Activated CD4-positive, alpha-beta memory T cell treated with anti-CD3 and anti-CD28 coated beads for 36 hours (primary cell): ENCODE measurements at regions of chr4 and their contacts with region 1.

Region 1: GRCh38 chr4:102500696-102501446 is at the start of gene NFKB1:
- DNase-seq: peak; percentile 87
- H3K4me3 Mint-ChIP-seq: peak within 1 kb of the TSS; percentile 94
- H3K27ac Mint-ChIP-seq: peak within 1 kb of the TSS; percentile 95
- H3K4me1 Mint-ChIP-seq: peaks cover 22% of the 10 kb centered on the region
- H3K27me3 Mint-ChIP-seq: no peaks in the 10 kb centered on the region
- total RNA-seq, gene NFKB1: 122 to 133 TPM

Region 2: DNA sequence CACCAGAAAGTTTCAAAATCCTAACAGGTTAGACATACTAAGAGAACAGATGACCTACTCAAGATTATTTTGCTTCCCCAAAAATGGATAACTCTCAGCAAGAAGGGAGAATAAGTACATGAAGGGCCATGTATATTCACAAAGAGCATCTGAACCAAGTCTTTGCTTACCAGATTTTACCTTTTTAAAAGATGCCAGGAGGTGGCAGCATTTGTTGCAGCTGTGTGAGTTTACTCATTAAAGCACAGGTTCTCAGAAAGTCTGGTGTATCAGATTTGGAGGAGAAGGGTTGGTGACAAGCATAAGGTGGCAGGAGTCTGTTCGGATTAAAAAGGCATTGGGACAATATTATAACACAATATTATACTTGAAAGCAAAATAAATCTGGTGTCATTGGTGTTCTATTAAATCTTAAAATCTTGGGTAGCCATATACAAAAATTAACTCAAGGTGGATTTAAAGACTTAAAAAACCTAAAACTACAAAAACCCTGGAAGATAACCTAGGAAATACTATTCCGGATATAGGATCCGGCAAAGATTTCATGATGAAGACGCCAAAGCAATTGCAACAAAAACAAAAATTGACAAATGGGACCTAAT is 51.0 kb before region 1 on chr4:
- CTCF ChIA-PET with region 1: interaction called, 4 read pairs
- POLR2A ChIA-PET with region 1: no interaction called
- intact Hi-C with region 1: loop called (anchors 2 kb)
- DNase-seq: peak; percentile 61
- H3K4me3 Mint-ChIP-seq: no peak overlapping the region
- H3K27ac Mint-ChIP-seq: peak overlapping the region; percentile 4
- H3K4me1 Mint-ChIP-seq: peaks cover 43% of the 10 kb centered on the region
- H3K27me3 Mint-ChIP-seq: no peaks in the 10 kb centered on the region

Region 3: GRCh38 chr4:102466298-102466697 is 34.6 kb before region 1 on chr4:
- CTCF ChIA-PET with region 1: no interaction called
- POLR2A ChIA-PET with region 1: no interaction called
- intact Hi-C with region 1: no loop called
- DNase-seq: no peak
- H3K4me3 Mint-ChIP-seq: no peak overlapping the region
- H3K27ac Mint-ChIP-seq: no peak overlapping the region
- H3K4me1 Mint-ChIP-seq: peaks cover 28% of the 10 kb centered on the region
- H3K27me3 Mint-ChIP-seq: no peaks in the 10 kb centered on the region

Region 4: DNA sequence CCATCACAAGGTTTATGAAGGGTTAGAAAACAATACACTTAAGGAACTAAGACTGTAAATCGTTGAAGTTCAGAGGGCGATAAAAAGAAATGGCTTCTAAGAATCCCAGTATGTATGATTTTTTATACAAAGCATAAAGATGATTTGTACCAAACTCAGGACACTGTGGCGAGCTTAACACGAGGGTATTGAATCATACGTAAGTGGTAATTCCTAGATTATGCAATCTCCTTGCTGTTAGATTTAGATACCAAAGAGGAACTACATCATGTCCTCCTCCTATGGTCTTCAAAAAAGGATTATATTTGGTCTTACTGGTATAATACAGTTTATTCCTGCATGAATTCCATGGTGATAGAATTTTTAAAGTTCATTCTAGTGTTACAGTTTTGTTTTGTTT is 24.2 kb after region 1 on chr4:
- CTCF ChIA-PET with region 1: interaction called, 6 read pairs
- POLR2A ChIA-PET with region 1: interaction called, 8 read pairs
- intact Hi-C with region 1: loop called (anchors 1 kb)
- DNase-seq: no peak
- H3K4me3 Mint-ChIP-seq: no peak overlapping the region
- H3K27ac Mint-ChIP-seq: peak overlapping the region; percentile 73
- H3K4me1 Mint-ChIP-seq: peaks cover 88% of the 10 kb centered on the region
- H3K27me3 Mint-ChIP-seq: no peaks in the 10 kb centered on the region

Region 5: GRCh38 chr4:102564399-102565059 is 63.7 kb after region 1 on chr4:
- CTCF ChIA-PET with region 1: no interaction called
- POLR2A ChIA-PET with region 1: no interaction called
- intact Hi-C with region 1: loop called (anchors 1 kb)
- DNase-seq: peak; percentile 51
- H3K4me3 Mint-ChIP-seq: no peak overlapping the region
- H3K27ac Mint-ChIP-seq: peak overlapping the region; percentile 40
- H3K4me1 Mint-ChIP-seq: peaks cover 82% of the 10 kb centered on the region
- H3K27me3 Mint-ChIP-seq: no peaks in the 10 kb centered on the region

Region 6: GRCh38 chr4:102610007-102610406 is 109.1 kb after region 1 on chr4:
- CTCF ChIA-PET with region 1: interaction called, 3 read pairs
- POLR2A ChIA-PET with region 1: interaction called, 7 read pairs
- intact Hi-C with region 1: loop called (anchors 2 kb)
- DNase-seq: no peak
- H3K4me3 Mint-ChIP-seq: no peak overlapping the region
- H3K27ac Mint-ChIP-seq: peak overlapping the region; percentile 31
- H3K4me1 Mint-ChIP-seq: peaks cover 86% of the 10 kb centered on the region
- H3K27me3 Mint-ChIP-seq: no peaks in the 10 kb centered on the region

Region 7: DNA sequence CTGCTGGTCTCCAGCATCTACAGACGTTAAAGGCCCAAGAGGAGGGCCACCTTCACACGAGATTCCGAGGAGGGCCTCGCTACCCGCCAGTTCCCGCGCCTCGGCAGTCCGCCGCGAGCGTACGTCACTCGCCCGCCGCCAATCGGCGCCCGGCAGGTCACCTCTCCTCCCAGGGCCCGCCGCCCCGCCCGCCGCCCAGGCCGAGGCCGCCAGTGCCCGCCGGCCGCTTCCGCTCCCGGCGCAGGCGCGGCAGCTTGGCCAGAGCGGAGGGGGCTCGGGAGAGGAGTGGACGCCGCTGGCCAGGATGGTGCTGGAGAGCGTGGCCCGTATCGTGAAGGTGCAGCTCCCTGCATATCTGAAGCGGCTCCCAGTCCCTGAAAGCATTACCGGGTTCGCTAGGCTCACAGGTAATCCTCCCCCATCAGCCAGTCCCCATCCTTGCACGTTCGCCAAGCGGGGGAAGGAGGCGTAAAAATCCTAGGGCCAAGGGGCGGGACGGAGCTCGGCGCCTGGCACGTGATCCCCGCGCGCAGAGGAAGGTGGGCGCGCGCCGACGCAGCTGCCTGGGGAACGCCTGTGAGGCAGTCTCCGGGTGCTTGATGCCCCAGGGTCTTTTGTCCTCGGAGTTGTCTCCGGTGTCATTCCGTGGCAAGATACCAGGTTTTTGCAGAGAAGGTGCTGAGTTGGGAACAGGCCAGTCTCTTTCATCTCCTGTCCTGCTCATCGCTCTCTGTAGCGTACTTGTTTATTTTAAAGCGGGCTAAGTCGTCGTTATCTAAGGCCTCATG is 368.1 kb after region 1 on chr4 and contains the start of gene CISD2:
- CTCF ChIA-PET with region 1: no interaction called
- POLR2A ChIA-PET with region 1: no interaction called
- intact Hi-C with region 1: loop called (anchors 1 kb)
- DNase-seq: peak; percentile 95
- H3K4me3 Mint-ChIP-seq: peak within 1 kb of the TSS; percentile 98
- H3K27ac Mint-ChIP-seq: peak within 1 kb of the TSS; percentile 98
- H3K4me1 Mint-ChIP-seq: peaks cover 54% of the 10 kb centered on the region
- H3K27me3 Mint-ChIP-seq: no peaks in the 10 kb centered on the region
- total RNA-seq, gene CISD2: 28.5 to 32.8 TPM

Region 8: GRCh38 chr4:103075901-103076739 is 575.2 kb after region 1 on chr4:
- CTCF ChIA-PET with region 1: no interaction called
- POLR2A ChIA-PET with region 1: no interaction called
- intact Hi-C with region 1: loop called (anchors 5 kb)
- DNase-seq: peak; percentile 72
- H3K4me3 Mint-ChIP-seq: peak overlapping the region; percentile 79
- H3K27ac Mint-ChIP-seq: peak overlapping the region; percentile 99
- H3K4me1 Mint-ChIP-seq: peaks cover 42% of the 10 kb centered on the region
- H3K27me3 Mint-ChIP-seq: no peaks in the 10 kb centered on the region

Region 9: DNA sequence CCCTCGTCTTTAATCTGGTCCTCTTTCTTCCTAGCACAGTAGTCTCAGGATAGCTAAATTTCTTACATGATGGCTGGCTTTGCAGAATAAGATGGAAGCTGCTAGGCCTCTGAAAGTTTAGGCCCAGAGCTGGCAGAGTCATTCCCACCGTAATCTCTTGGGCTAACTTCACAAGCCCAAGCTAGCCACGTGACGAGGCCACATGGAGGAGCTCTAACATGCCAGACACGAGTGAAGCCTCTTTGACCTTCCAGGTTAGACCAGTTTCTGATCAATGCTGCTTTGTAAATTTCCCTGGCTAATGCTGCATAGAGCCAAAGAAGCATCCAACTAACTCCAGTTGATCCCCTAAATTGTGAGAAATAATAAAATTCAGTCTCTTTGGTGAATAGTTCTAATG is 706.8 kb after region 1 on chr4:
- CTCF ChIA-PET with region 1: no interaction called
- POLR2A ChIA-PET with region 1: no interaction called
- intact Hi-C with region 1: no loop called
- DNase-seq: no peak
- H3K4me3 Mint-ChIP-seq: no peak overlapping the region
- H3K27ac Mint-ChIP-seq: no peak overlapping the region
- H3K4me1 Mint-ChIP-seq: peaks cover 4% of the 10 kb centered on the region
- H3K27me3 Mint-ChIP-seq: peaks cover 8% of the 10 kb centered on the region